A673 (cell line): ENCODE measurements at regions of chr10 and their contacts with region 1.

Region 1: GRCh38 chr10:75235375-75236177 is at the start of gene COMTD1:
- DNase-seq: peak; percentile 92
- H3K4me3 ChIP-seq: peak within 1 kb of the TSS; percentile 62
- H3K27ac ChIP-seq: no peak within 1 kb of the TSS
- H3K4me1 ChIP-seq: peaks cover 27% of the 10 kb centered on the region
- H3K27me3 ChIP-seq: no peaks in the 10 kb centered on the region
- CTCF ChIP-seq: peak; percentile 100
- total RNA-seq, gene COMTD1: 3.4 and 3.8 TPM in 2 replicates

Region 2: DNA sequence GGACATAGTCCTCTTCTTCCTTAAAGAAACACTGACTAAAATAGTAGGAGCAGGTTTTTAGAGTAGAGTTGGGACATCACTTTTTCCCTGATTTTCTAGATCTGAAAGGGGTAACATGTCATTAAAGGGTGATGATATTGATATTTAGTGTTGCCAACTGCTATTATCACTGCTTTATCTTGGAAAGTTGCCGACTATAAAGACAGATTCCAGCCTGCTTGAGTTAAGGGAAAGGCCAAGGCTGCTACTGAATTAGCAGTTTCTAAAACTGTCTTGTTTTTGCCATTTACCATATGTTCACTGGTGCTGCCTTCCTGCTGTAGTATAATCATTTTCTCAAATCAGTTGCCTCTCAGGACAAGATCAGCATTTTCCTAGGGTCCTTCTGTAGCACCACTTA is 1114.7 kb before region 1 on chr10:
- CTCF ChIA-PET with region 1: no interaction called
- POLR2A ChIA-PET with region 1: no interaction called
- intact Hi-C with region 1: loop called (anchors 10 kb)
- DNase-seq: no peak
- H3K4me3 ChIP-seq: no peak overlapping the region
- H3K27ac ChIP-seq: no peak overlapping the region
- H3K4me1 ChIP-seq: peaks cover 10% of the 10 kb centered on the region
- H3K27me3 ChIP-seq: no peaks in the 10 kb centered on the region
- CTCF ChIP-seq: no peak

Region 3: DNA sequence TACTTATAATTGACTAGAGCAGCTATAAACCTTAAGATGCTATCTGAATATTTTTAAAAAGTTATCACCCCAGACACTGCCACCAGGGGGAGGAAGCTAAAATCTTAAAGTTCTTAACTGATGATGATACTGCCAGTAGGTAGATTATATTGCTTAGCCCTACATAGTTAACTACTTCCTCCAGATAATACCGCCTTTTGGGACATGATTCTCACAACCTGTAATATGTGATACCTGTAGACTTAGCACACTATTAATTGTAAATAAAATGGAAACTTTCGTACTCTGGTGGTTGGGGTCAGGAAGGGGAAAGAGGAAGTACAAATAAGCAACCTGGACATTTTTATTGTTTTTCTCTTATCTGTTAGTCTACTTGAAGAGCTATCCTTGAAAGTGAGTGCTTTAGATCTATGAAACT is 815.6 kb before region 1 on chr10:
- CTCF ChIA-PET with region 1: no interaction called
- POLR2A ChIA-PET with region 1: no interaction called
- intact Hi-C with region 1: loop called (anchors 10 kb)
- DNase-seq: peak; percentile 87
- H3K4me3 ChIP-seq: no peak overlapping the region
- H3K27ac ChIP-seq: peak overlapping the region; percentile 83
- H3K4me1 ChIP-seq: peaks cover 41% of the 10 kb centered on the region
- H3K27me3 ChIP-seq: no peaks in the 10 kb centered on the region
- CTCF ChIP-seq: peak; percentile 81

Region 4: GRCh38 chr10:75111367-75111906 is 124.1 kb before region 1 on chr10 and contains the start of gene SAMD8:
- CTCF ChIA-PET with region 1: no interaction called
- POLR2A ChIA-PET with region 1: no interaction called
- intact Hi-C with region 1: loop called (anchors 10 kb)
- DNase-seq: peak; percentile 98
- H3K4me3 ChIP-seq: peak within 1 kb of the TSS; percentile 98
- H3K27ac ChIP-seq: peak within 1 kb of the TSS; percentile 92
- H3K4me1 ChIP-seq: peaks cover 6% of the 10 kb centered on the region
- H3K27me3 ChIP-seq: no peaks in the 10 kb centered on the region
- CTCF ChIP-seq: no peak
- total RNA-seq, gene SAMD8: 17.1 and 18.1 TPM in 2 replicates

Region 5: DNA sequence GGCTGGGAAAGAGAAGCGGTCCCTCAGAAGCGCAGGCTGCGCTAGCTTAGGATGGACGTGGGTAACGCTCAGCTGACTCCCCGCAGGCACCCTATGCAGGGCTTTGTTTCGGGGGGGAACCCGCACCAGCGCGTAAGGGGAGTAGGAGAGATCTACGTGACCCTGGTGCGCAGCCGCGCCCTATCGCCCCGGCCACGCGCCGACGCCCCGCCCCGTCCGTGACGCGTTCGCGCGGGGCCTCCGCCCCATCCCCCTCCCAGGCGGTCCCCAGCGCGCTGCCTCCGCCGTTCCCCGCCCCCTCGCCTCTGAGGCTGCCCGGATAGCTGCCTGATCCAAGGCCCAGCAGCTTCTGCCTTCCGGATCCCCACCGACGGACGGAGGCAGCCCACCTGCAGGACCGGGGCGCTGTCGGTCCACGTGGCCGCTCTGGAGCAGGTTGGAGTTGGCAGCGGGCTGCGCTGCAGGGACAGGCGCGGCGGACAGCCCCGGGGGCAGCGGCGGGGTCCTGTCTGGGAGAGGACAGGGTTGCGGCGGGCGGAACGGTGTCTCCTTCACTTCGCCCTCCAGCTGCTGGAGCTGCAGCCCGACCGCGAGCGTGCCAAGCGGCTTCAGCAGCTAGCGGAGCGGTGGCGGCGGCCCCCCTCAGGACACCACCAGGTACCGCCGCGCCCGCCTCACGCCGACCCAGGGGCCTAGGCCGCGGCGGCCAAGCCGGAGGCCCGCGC is 25.1 kb before region 1 on chr10 and contains the start of gene VDAC2:
- CTCF ChIA-PET with region 1: interaction called, 8 read pairs
- POLR2A ChIA-PET with region 1: interaction called, 3 read pairs
- intact Hi-C with region 1: loop called (anchors 2 kb)
- DNase-seq: peak; percentile 93
- H3K4me3 ChIP-seq: peak within 1 kb of the TSS; percentile 99
- H3K27ac ChIP-seq: peak within 1 kb of the TSS; percentile 100
- H3K4me1 ChIP-seq: peaks cover 11% of the 10 kb centered on the region
- H3K27me3 ChIP-seq: no peaks in the 10 kb centered on the region
- CTCF ChIP-seq: no peak
- total RNA-seq, gene VDAC2: 307 and 328 TPM in 2 replicates